Activated T-helper 2 cell treated with anti-CD3 and anti-CD28 coated beads, Interferon-gamma antibody, Interleukin-2, Interleukin-4, amounts not matched to agents 10 μg/mL and 5 μg/mL and 100 μg/mL, durations not matched to agents 14 hours and 24 hours and 36 hours (primary cell): ENCODE measurements at regions of chr11 and their contacts with region 1.

Region 1: GRCh38 chr11:44095506-44096394 is at the start of gene EXT2:
- DNase-seq: peak; percentile 82
- H3K4me3 Mint-ChIP-seq: peak within 1 kb of the TSS; percentile 83
- H3K27ac Mint-ChIP-seq: peak within 1 kb of the TSS; percentile 34
- H3K4me1 Mint-ChIP-seq: peaks cover 21% of the 10 kb centered on the region
- H3K27me3 Mint-ChIP-seq: peaks cover 2% of the 10 kb centered on the region
- total RNA-seq, gene EXT2: 35.1 and 35.6 TPM in 2 replicates

Region 2: GRCh38 chr11:43987384-43988039 is 108.2 kb before region 1 on chr11:
- intact Hi-C with region 1: no loop called
- DNase-seq: no peak
- H3K4me3 Mint-ChIP-seq: no peak overlapping the region
- H3K27ac Mint-ChIP-seq: no peak overlapping the region
- H3K4me1 Mint-ChIP-seq: no peaks in the 10 kb centered on the region
- H3K27me3 Mint-ChIP-seq: peaks cover 4% of the 10 kb centered on the region

Region 3: GRCh38 chr11:44065841-44066731 is 29.7 kb before region 1 on chr11 and contains the start of gene ACCS:
- intact Hi-C with region 1: loop called (anchors 2 kb)
- DNase-seq: peak; percentile 88
- H3K4me3 Mint-ChIP-seq: peak within 1 kb of the TSS; percentile 87
- H3K27ac Mint-ChIP-seq: peak within 1 kb of the TSS; percentile 95
- H3K4me1 Mint-ChIP-seq: peaks cover 36% of the 10 kb centered on the region
- H3K27me3 Mint-ChIP-seq: no peaks in the 10 kb centered on the region
- total RNA-seq, gene ACCS: 22.8 and 25.9 TPM in 2 replicates

Region 4: GRCh38 chr11:44120169-44120568 is 24.4 kb after region 1 on chr11:
- intact Hi-C with region 1: no loop called
- DNase-seq: no peak
- H3K4me3 Mint-ChIP-seq: no peak overlapping the region
- H3K27ac Mint-ChIP-seq: no peak overlapping the region
- H3K4me1 Mint-ChIP-seq: no peaks in the 10 kb centered on the region
- H3K27me3 Mint-ChIP-seq: no peaks in the 10 kb centered on the region

Region 5: GRCh38 chr11:44309483-44310205 is 213.9 kb after region 1 on chr11 and contains the start of gene ALX4:
- intact Hi-C with region 1: loop called (anchors 10 kb)
- DNase-seq: no peak
- H3K4me3 Mint-ChIP-seq: peak within 1 kb of the TSS; percentile 56
- H3K27ac Mint-ChIP-seq: peak within 1 kb of the TSS; percentile 63
- H3K4me1 Mint-ChIP-seq: peaks cover 22% of the 10 kb centered on the region
- H3K27me3 Mint-ChIP-seq: peaks cover 88% of the 10 kb centered on the region
- total RNA-seq, gene ALX4: not detected in 2 replicates